ENCODE measurements at regions of chr7 and their contacts with region 1.

Region 1: GRCh38 chr7:43869006-43869866 is at the start of gene MRPS24:
- DNase-seq: peak; percentile 84 to 95 (median 92)
- ATAC-seq: peak; percentile 100
- H3K4me3 ChIP-seq: peak within 1 kb of the TSS; percentile 92
- H3K4me3 Mint-ChIP-seq: peak within 1 kb of the TSS; percentile 88 to 97 (median 95)
- H3K27ac ChIP-seq: peak within 1 kb of the TSS; percentile 78
- H3K27ac Mint-ChIP-seq: peak within 1 kb of the TSS; percentile 86 to 97 (median 90)
- H3K4me1 ChIP-seq: peaks cover 13 to 15% of the 10 kb centered on the region in 2 donors
- H3K4me1 Mint-ChIP-seq: peaks cover 0 to 24% (median 22%) of the 10 kb centered on the region in 7 donors
- H3K27me3 ChIP-seq: no peaks in the 10 kb centered on the region
- H3K27me3 Mint-ChIP-seq: no peaks in the 10 kb centered on the region
- total RNA-seq, gene MRPS24: 44.2 to 76.6 (median 62.3) TPM

Region 2: DNA sequence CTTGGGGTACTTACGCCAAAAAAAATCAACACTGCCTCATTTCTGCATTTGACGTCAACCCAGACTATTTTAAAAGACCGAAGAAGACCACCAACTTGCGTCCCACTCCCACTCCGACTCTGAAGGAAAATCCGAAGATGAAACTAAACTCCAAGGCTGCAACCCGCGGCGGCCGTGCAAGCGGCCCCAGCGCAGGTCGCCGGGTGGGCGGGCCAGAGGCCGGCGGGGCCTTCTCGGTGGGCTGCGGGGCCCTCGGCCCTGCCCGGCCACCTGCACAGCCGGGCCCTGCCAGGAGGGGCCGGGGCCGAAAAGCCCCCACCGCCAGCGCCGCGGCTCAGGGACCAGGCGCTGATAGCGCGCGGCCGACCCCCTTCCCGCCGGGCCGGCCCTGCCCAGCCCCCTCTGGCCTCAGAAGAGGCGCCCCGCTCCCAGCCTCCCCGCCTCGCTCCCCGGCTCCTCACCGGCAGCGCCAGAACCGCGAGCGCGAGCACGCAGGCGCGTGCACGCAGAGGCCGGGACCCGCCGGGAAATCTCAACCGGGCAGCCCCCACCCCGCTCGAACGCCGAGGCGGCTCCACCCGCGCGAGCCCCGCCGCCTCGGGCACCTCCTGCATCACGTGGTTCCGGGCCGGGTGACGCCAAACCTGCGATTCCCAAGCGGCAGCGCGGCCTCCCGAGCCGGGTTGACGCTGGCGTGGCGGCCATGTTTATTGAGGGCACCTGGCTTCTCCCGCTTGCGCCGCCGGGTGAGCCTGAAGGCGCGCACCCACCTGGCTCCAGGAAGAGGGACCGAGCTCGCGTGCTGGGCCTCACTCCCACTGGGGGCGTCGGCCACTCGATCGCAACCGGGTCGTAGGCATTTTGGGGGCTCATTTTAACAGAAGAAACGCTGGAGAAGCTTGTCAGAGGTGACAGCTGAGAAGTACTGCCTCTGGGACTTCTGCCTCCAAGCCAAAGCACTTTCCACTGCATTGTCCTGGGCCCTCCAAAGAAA is 957.5 kb before region 1 on chr7 and contains the start of gene C7orf25:
- CTCF ChIA-PET with region 1: no interaction called
- POLR2A ChIA-PET with region 1: no interaction called
- intact Hi-C with region 1: loop called in 1 of 2 experiments (anchors 1 kb)
- DNase-seq: peak; percentile 92 to 97 (median 95)
- ATAC-seq: peak; percentile 95
- H3K4me3 ChIP-seq: peak within 1 kb of the TSS; percentile 64
- H3K4me3 Mint-ChIP-seq: peak within 1 kb of the TSS; percentile 81 to 98 (median 90)
- H3K27ac ChIP-seq: peak within 1 kb of the TSS; percentile 82
- H3K27ac Mint-ChIP-seq: peak within 1 kb of the TSS; percentile 81 to 95 (median 92)
- H3K4me1 ChIP-seq: peaks cover 9 to 18% of the 10 kb centered on the region in 2 donors
- H3K4me1 Mint-ChIP-seq: peaks cover 28 to 73% (median 53%) of the 10 kb centered on the region in 7 donors
- H3K27me3 ChIP-seq: no peaks in the 10 kb centered on the region
- H3K27me3 Mint-ChIP-seq: no peaks in the 10 kb centered on the region
- total RNA-seq, gene C7orf25: 2.3 to 10.9 (median 5.3) TPM

Region 3: DNA sequence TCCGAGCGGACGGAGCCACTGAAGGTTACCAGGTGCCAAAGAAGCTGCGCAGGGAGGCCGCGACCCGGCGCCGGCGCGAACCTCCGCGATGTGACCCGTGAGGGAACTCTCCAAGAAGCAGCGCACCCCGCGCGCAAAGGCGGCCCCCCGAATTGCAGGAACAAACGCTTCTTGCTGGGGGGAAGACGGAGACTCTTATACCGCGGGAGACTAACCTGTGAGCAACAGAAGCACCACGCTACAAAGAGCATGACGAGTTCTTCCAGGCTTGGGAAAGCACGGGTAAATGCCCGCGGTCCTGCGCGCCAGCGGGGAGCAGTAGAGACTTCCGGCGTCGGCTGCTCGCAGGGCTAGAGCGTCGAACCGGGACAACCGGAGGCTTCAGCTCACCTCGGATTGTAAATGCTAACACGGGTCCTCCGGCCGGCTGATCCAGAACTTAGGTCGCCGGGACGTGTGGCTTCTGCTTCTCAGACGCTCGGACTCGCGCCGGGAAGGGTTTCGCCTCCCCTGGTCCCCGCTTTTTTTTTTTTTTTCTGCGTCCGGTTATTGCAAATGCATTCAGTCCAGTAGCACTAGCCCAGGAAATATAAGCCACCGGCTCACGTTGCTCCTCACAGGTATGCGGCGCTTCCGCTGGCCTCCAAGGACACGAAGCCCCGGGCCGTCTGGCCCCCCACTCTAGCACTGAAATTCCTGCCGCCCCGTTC is 139.9 kb before region 1 on chr7 and contains the start of gene COA1:
- CTCF ChIA-PET with region 1: no interaction called
- POLR2A ChIA-PET with region 1: no interaction called
- intact Hi-C with region 1: loop called in 1 of 2 experiments (anchors 1 kb)
- DNase-seq: peak; percentile 61 to 85 (median 81)
- ATAC-seq: peak; percentile 98
- H3K4me3 ChIP-seq: peak within 1 kb of the TSS; percentile 91
- H3K4me3 Mint-ChIP-seq: peak within 1 kb of the TSS; percentile 81 to 96 (median 94)
- H3K27ac ChIP-seq: peak within 1 kb of the TSS; percentile 76
- H3K27ac Mint-ChIP-seq: peak within 1 kb of the TSS; percentile 75 to 95 (median 90)
- H3K4me1 ChIP-seq: peaks cover 15 to 24% of the 10 kb centered on the region in 2 donors
- H3K4me1 Mint-ChIP-seq: peaks cover 27 to 57% (median 38%) of the 10 kb centered on the region in 7 donors
- H3K27me3 ChIP-seq: no peaks in the 10 kb centered on the region
- H3K27me3 Mint-ChIP-seq: peaks cover 0 to 4% (median 0%) of the 10 kb centered on the region in 5 donors
- total RNA-seq, gene COA1: 51.3 to 73.3 (median 64.6) TPM

Region 4: GRCh38 chr7:43758029-43758821 is 111.0 kb before region 1 on chr7 and contains the start of gene BLVRA:
- CTCF ChIA-PET with region 1: no interaction called
- POLR2A ChIA-PET with region 1: no interaction called
- intact Hi-C with region 1: no loop called
- DNase-seq: peak; percentile 55 to 82 (median 66)
- ATAC-seq: peak; percentile 88
- H3K4me3 ChIP-seq: peak within 1 kb of the TSS; percentile 90
- H3K4me3 Mint-ChIP-seq: peak within 1 kb of the TSS; percentile 72 to 93 (median 89)
- H3K27ac ChIP-seq: peak within 1 kb of the TSS; percentile 77
- H3K27ac Mint-ChIP-seq: peak within 1 kb of the TSS; percentile 72 to 94 (median 88)
- H3K4me1 ChIP-seq: peaks cover 3 to 5% of the 10 kb centered on the region in 2 donors
- H3K4me1 Mint-ChIP-seq: peaks cover 24 to 48% (median 36%) of the 10 kb centered on the region in 7 donors
- H3K27me3 ChIP-seq: no peaks in the 10 kb centered on the region
- H3K27me3 Mint-ChIP-seq: peaks cover 0 to 10% (median 0%) of the 10 kb centered on the region in 5 donors
- total RNA-seq, gene BLVRA: 11.2 to 41.2 (median 16.1) TPM

Region 5: DNA sequence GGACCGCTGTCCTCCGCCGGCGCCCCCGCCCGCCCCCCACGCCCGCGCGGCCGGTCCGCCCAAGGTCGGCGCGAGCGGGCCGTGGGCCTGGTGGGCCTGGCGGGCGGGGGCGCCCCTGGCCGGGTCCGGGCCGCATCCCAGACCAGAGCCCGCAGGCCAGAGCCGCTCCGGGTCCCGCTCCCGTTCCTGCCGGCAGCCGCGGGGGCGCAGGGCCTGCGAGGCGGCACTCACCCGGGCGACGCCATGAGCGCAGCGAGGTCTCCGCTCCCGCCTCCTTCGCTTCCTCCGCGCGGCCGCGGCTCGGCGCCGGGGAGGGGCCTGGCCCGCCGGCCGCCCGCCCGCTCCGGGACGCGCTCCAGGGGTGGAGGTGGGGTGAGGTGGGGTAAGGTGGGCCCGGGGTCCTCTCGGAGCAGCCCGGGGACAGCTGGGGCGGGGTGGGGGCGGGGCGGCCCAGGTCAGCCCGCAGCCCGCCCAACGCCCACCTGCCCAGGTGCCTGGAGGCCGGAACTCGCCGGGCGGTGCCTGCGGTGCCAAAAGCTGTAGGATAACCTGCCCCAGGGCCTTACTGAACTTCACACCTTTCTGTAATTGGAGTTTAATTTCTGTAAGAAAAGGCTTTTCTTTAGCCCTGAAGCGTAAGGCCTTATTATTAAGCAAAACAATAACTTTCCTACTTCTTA is 37.2 kb after region 1 on chr7 and contains the start of gene URGCP:
- CTCF ChIA-PET with region 1: no interaction called
- POLR2A ChIA-PET with region 1: interaction called, 4 read pairs
- intact Hi-C with region 1: loop called (anchors 1 kb)
- DNase-seq: peak; percentile 37 to 70 (median 52)
- ATAC-seq: peak; percentile 92
- H3K4me3 ChIP-seq: peak within 1 kb of the TSS; percentile 74
- H3K4me3 Mint-ChIP-seq: peak within 1 kb of the TSS; percentile 91 to 97 (median 95)
- H3K27ac ChIP-seq: peak within 1 kb of the TSS; percentile 78
- H3K27ac Mint-ChIP-seq: peak within 1 kb of the TSS; percentile 92 to 97 (median 96)
- H3K4me1 ChIP-seq: peaks cover 18 to 22% of the 10 kb centered on the region in 2 donors
- H3K4me1 Mint-ChIP-seq: peaks cover 21 to 57% (median 40%) of the 10 kb centered on the region in 7 donors
- H3K27me3 ChIP-seq: no peaks in the 10 kb centered on the region
- H3K27me3 Mint-ChIP-seq: no peaks in the 10 kb centered on the region
- total RNA-seq, gene URGCP: 20.0 to 33.7 (median 26.8) TPM

Region 6: DNA sequence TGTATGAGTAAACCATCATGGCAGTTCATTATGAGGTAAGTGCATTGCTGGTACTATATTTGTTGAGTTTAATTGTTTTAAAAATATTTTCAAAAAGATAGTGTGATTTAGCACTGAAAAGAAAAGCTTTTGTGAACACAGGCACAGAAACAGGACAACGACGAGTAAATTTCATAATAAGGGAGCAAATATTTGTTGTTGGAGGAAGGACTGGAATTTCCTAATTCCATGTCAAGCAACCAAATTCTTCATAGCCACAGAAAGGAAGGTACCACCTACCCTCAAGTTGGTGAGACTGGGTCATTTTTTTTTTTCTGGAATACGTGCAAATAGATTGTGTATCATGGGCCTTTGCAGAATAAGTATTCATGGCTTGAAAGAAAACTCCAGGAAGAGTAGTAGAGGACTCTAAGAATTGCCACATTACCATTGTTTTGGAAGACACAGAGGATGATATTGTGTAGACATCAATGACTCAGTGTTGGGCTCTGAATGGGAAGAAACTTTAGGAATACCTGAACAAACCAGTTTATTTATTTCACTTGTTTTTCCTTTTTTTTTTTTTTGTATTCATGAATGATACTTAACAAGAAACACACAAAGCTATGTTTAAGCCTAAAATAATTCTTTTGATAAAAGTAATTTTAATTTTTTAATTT is 64.8 kb after region 1 on chr7:
- CTCF ChIA-PET with region 1: no interaction called
- POLR2A ChIA-PET with region 1: no interaction called
- intact Hi-C with region 1: no loop called
- DNase-seq: no peak
- ATAC-seq: no peak
- H3K4me3 ChIP-seq: no peak overlapping the region
- H3K4me3 Mint-ChIP-seq: no peak overlapping the region
- H3K27ac ChIP-seq: no peak overlapping the region
- H3K27ac Mint-ChIP-seq: no peak overlapping the region
- H3K4me1 ChIP-seq: no peaks in the 10 kb centered on the region
- H3K4me1 Mint-ChIP-seq: peaks cover 0 to 13% (median 7%) of the 10 kb centered on the region in 7 donors
- H3K27me3 ChIP-seq: no peaks in the 10 kb centered on the region
- H3K27me3 Mint-ChIP-seq: no peaks in the 10 kb centered on the region

Measured in naive thymus-derived CD4-positive, alpha-beta T cell (primary cell).